ENCODE measurements at regions of chr2 and their contacts with region 1.

Region 1: DNA sequence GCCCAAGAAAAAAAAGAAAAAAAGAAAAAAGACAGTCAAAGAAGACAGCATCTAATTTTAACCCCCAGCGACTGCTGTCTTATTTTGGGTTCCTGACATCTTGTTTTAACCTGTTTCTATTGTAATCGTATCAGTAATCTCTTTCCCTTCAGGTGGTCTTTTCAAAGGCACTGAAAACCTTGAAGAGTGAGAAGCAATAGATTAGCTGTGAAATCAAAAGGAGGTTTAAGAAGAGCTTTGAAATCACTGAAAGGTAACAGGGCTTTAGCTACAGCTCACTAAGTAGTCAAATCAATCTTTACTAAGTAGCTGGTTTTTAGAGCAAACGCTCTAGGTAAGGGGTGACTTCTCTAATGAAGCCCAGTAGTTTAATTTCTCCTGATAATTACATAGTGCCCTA is 5.4 kb upstream of the TANC1 start:
- DNase-seq: no peak
- H3K4me3 ChIP-seq: no peak overlapping the region
- H3K27ac ChIP-seq: no peak overlapping the region
- H3K4me1 ChIP-seq: peaks cover 4% of the 10 kb centered on the region
- H3K27me3 ChIP-seq: no peaks in the 10 kb centered on the region
- CTCF ChIP-seq: no peak

Region 2: GRCh38 chr2:158994920-158995676 is 32.0 kb after region 1 on chr2:
- CTCF ChIA-PET with region 1: interaction called, 14 read pairs
- POLR2A ChIA-PET with region 1: no interaction called
- intact Hi-C with region 1: no loop called
- DNase-seq: peak; percentile 32
- H3K4me3 ChIP-seq: no peak overlapping the region
- H3K27ac ChIP-seq: no peak overlapping the region
- H3K4me1 ChIP-seq: peaks cover 17% of the 10 kb centered on the region
- H3K27me3 ChIP-seq: no peaks in the 10 kb centered on the region
- CTCF ChIP-seq: no peak

Measured in A673 (cell line).